Heart right ventricle (tissue), 16 donors: ENCODE measurements at regions of chr9 and their contacts with region 1.

Region 1: DNA sequence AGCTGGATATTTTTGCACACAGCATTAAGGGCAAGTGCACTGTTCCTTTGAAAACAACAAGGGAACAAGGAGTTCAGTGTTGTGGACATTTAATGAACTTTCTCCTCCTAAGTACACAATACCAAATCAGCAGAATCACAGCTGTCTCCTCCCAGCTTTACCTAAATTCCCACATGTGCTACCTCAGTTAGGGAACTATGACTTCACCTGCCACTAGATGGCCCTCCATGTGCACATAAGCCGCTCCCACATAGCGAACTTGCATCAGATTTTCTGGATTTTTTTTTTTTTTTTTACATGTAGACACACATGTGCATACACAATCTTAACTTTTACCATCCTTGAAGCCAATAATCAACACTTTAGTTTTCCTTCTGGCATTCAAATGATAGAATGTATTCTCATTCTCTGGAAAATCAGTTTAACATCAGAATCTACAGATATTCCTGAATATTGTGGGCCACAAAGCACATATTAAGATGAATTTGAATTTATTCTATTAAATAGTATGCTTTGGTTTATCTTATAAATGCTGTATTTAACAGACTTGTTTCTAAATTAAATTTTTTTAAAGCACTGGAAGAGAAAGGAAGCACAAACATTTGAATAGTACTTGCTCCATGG is 123.6 kb downstream of the PALM2AKAP2 start:
- DNase-seq: peak; percentile 28 to 82
- ATAC-seq: peak in 6 of 8 donors; percentile 36 to 56 (median 40)
- H3K4me3 ChIP-seq: no peak overlapping the region
- H3K27ac ChIP-seq: peak overlapping the region in 1 of 10 donors; percentile 16
- H3K4me1 ChIP-seq: peaks cover 0 to 76% (median 35%) of the 10 kb centered on the region in 9 donors
- H3K27me3 ChIP-seq: no peaks in the 10 kb centered on the region
- CTCF ChIP-seq: peak; percentile 46 to 93 (median 84)

Region 2: GRCh38 chr9:109996936-109997580 is 93.4 kb after region 1 on chr9:
- intact Hi-C with region 1: loop called in 1 of 10 experiments (anchors 5 kb)
- DNase-seq: no peak
- ATAC-seq: no peak
- H3K4me3 ChIP-seq: no peak overlapping the region
- H3K27ac ChIP-seq: peak overlapping the region in 7 of 10 donors; percentile 39 to 84 (median 68)
- H3K4me1 ChIP-seq: peaks cover 3 to 56% (median 30%) of the 10 kb centered on the region in 9 donors
- H3K27me3 ChIP-seq: no peaks in the 10 kb centered on the region
- CTCF ChIP-seq: no peak

Region 3: DNA sequence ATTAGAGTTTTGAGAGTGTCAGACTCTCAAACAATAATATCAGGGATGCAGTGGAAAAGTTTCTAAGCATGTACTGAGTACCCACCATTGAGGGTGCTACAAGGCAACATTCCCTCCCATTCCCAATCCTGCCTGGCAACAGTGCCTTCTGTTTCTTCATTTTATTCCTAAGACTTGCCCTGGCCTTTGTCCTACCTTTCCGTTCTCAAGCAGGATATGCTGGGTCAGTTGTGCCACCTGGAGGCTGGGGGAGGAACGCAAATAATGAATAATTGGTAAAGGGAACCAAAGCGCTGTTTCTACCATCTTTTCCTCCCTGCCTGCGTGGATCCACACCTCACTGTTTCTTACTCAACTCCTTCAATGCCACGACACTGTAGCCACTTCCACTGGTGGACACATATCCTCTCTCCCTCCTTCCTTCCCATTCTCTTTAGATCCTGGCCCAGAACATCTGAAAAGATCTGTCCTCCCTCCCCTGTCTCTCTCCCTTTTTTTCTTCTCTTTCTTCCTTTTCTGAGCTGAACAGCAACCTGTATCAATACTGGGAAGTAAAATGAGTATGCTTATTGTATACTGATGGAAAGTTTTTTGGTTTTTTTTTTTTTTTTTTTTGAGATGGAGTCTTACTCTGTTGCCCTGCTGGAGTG is 154.8 kb after region 1 on chr9:
- intact Hi-C with region 1: loop called in 7 of 10 experiments (anchors 1 to 10 kb)
- DNase-seq: peak; percentile 29 to 56
- ATAC-seq: peak; percentile 41 to 73 (median 70)
- H3K4me3 ChIP-seq: no peak overlapping the region
- H3K27ac ChIP-seq: peak overlapping the region in 4 of 10 donors; percentile 29 to 69 (median 40)
- H3K4me1 ChIP-seq: peaks cover 4 to 87% (median 42%) of the 10 kb centered on the region in 9 donors
- H3K27me3 ChIP-seq: no peaks in the 10 kb centered on the region
- CTCF ChIP-seq: peak in 8 of 9 donors; percentile 28 to 67 (median 57)

Region 4: DNA sequence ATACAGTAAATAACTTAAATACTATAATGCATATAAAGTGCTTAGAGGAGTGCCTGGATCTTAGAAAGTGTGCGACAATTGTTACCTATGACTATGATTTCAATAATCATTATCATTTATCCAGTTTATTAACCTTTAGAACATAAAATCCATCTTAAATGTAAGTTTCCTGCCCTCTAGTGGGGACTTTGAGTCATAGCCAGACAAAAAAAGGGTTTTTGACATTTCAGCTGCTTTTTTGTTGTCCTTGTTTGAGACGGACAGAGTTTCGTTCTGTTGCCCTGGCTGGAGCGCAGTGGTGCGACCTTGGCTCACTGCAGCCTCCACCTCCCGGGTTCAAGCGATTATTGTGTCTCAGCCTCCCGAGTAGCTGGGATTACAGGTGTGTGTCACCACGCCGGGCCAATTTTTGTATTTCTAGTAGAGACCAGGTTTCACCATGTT is 314.1 kb after region 1 on chr9:
- intact Hi-C with region 1: loop called in 8 of 10 experiments (anchors 2 to 10 kb)
- DNase-seq: no peak
- ATAC-seq: no peak
- H3K4me3 ChIP-seq: no peak overlapping the region
- H3K27ac ChIP-seq: no peak overlapping the region
- H3K4me1 ChIP-seq: peaks cover 0 to 12% (median 0%) of the 10 kb centered on the region in 9 donors
- H3K27me3 ChIP-seq: no peaks in the 10 kb centered on the region
- CTCF ChIP-seq: peak; percentile 56 to 88 (median 79)